Activated naive CD4-positive, alpha-beta T cell treated with anti-CD3 and anti-CD28 coated beads for 36 hours (primary cell): ENCODE measurements at regions of chr2 and their contacts with region 1.

Region 1: DNA sequence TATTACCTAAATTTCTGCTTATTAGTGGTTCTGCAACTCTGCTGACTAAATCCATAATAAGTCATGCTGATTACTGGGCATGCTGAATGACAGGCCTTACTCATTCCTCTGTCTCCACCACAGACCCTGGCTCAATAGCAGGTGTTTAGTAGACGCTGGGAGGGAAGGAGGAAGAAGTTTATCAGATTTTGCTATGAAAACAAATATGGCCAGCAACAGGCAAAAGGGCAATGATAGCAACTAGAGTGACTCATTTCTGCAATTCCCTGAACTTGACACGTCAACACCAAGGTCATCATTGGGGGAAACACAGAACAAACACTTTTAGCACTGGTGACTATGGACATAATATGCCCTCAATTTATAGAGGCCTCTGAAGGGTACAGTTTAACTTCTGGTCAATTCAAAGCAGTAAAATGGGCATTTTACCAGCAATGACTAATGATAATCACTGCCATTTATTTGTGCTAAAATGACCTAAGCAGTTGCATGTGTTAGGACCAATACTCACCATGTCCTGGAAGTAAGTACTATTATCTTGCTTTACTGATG is 35.2 kb downstream of the TMEM163 start:
- DNase-seq: peak; percentile 42
- H3K4me3 Mint-ChIP-seq: no peak overlapping the region
- H3K27ac Mint-ChIP-seq: no peak overlapping the region
- H3K4me1 Mint-ChIP-seq: peaks cover 20% of the 10 kb centered on the region
- H3K27me3 Mint-ChIP-seq: peaks cover 3% of the 10 kb centered on the region

Region 2: DNA sequence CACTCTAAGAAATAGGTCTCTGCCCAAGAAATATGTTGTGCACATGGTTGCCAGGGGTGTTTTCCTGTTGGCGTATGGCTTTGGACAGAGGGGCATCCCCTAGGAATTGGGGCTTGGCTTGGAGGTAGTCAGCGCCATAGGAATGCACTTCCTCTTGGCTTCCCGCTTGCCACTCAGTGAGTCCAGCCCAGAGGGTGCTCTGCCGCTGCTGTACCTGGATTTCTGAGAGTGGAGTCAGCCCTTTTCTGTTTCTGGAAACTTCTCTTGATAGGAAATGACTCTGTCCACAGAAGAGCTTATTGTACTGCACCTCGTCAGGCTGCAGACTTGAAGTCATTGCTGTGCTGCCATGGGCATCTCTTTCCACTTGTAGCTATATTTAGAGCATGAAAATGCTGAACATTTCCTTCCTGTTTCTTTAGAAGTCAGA is 546.4 kb before region 1 on chr2:
- CTCF ChIA-PET with region 1: no interaction called
- intact Hi-C with region 1: no loop called
- DNase-seq: peak; percentile 41
- H3K4me3 Mint-ChIP-seq: peak overlapping the region; percentile 37
- H3K27ac Mint-ChIP-seq: no peak overlapping the region
- H3K4me1 Mint-ChIP-seq: peaks cover 45% of the 10 kb centered on the region
- H3K27me3 Mint-ChIP-seq: no peaks in the 10 kb centered on the region

Region 3: GRCh38 chr2:134668821-134669220 is 14.8 kb before region 1 on chr2:
- CTCF ChIA-PET with region 1: no interaction called
- intact Hi-C with region 1: loop called (anchors 1 kb)
- DNase-seq: peak; percentile 95
- H3K4me3 Mint-ChIP-seq: no peak overlapping the region
- H3K27ac Mint-ChIP-seq: no peak overlapping the region
- H3K4me1 Mint-ChIP-seq: peaks cover 63% of the 10 kb centered on the region
- H3K27me3 Mint-ChIP-seq: peaks cover 29% of the 10 kb centered on the region

Region 4: DNA sequence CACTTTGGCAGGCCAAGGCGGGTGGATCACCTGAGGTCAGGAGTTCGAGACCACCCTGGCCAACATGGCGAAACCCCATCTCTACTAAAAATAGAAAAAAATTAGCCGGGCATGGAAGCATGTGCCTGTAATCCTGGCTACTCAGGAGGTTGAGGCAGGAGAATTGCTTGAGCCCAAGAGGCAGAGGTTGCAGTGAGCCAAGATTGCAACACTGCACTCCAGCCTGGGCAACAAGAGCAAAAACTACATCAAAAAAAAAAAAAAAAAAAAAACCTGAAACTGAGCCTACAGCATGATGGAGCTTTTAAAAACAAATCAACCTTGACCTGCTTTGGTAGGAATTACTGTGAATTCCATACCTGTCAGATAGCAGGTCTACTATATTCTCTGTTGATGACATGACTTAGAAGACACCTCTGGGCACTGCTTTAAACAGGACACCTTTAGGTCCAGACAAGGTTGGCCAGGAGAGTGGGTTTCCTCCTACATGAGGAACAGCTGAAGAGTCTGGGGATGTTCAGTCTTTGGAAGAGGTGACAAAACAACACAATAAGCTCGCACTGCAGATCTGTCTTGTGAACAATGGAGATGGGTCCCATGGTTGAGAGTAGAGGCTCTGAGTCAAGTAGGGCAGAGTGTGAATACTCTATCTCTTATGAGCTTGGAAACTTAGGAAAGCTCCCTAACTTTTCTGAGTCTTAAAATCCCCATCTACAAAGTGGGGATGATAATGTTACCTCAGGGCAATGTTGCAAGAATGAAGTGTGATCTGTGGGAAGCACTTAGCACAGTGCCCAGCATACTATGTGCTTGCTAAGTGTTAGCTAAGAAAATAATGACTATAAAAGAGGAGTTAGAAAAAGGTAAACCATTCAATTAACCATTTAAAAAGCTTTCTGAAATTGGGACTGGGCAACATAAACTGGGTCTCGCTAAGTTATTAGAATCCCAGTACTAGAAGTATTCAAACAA is 10.0 kb after region 1 on chr2:
- CTCF ChIA-PET with region 1: interaction called, 4 read pairs
- intact Hi-C with region 1: loop called (anchors 1 kb)
- DNase-seq: no peak
- H3K4me3 Mint-ChIP-seq: no peak overlapping the region
- H3K27ac Mint-ChIP-seq: no peak overlapping the region
- H3K4me1 Mint-ChIP-seq: no peaks in the 10 kb centered on the region
- H3K27me3 Mint-ChIP-seq: peaks cover 10% of the 10 kb centered on the region

Region 5: DNA sequence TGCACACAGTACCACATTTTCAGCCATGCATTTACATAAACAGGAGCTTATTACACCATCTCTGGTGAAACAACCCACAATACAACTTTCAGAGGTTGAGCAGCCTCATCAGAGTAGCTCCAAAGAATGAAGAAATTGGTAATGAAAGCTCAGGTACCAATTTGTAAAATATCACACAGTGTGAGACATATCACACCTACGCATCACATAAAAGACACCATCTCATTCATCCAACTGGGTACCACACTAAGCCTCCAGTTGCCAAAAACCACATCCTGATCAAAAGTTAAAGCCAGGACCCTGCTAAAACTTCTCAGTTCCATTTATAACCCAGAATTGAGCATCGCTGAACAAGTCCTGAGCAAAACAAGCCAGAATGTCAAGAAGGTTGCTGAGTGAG is 30.6 kb after region 1 on chr2:
- CTCF ChIA-PET with region 1: no interaction called
- intact Hi-C with region 1: loop called (anchors 2 kb)
- DNase-seq: peak; percentile 18
- H3K4me3 Mint-ChIP-seq: no peak overlapping the region
- H3K27ac Mint-ChIP-seq: no peak overlapping the region
- H3K4me1 Mint-ChIP-seq: peaks cover 17% of the 10 kb centered on the region
- H3K27me3 Mint-ChIP-seq: peaks cover 57% of the 10 kb centered on the region